AG04450 (cell line): ENCODE measurements at regions of chr6 and their contacts with region 1.

Region 1: DNA sequence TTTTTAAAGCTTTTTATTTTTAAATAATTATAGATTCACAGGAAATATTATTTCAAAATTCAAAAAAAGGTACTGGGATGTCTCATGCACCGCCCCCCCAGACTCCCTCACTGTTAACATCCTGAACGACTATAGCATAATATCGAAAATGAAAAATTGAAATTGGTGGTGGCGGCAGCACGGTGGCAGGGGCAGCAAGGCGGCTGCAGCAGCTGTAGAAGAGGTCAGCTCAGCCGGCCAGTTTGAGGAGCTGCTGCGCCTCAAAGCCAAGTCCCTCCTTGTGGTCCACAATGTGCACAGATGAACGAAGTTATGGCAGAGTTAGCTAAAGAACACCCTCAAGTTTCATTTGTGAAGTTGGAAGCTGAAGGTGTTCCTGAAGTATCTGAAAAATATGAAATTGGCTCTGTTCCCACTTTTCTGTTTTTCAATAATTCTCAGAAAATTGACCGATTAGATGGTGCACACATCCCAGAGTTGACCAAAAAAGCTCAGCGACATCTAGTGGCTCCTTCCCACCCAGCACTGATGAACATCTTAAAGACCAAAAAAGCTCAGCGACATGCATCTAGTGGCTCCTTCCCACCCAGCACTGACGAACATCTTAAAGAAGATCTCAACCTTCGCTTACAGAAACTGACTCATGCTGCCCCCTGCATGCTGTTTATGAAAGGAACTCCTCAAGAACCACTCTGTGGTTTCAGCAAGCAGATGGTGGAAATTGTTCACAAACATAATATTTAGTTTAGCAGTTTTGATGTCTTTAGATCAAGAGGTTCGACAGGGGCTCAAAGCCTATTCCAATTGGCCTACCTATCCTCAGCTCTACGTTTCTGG is 100.8 kb downstream of the FAM217A start:
- DNase-seq: peak; percentile 89
- H3K4me3 ChIP-seq: no peak overlapping the region
- H3K27ac ChIP-seq: no peak overlapping the region
- H3K27me3 ChIP-seq: no peaks in the 10 kb centered on the region
- CTCF ChIP-seq: peak; percentile 76

Region 2: DNA sequence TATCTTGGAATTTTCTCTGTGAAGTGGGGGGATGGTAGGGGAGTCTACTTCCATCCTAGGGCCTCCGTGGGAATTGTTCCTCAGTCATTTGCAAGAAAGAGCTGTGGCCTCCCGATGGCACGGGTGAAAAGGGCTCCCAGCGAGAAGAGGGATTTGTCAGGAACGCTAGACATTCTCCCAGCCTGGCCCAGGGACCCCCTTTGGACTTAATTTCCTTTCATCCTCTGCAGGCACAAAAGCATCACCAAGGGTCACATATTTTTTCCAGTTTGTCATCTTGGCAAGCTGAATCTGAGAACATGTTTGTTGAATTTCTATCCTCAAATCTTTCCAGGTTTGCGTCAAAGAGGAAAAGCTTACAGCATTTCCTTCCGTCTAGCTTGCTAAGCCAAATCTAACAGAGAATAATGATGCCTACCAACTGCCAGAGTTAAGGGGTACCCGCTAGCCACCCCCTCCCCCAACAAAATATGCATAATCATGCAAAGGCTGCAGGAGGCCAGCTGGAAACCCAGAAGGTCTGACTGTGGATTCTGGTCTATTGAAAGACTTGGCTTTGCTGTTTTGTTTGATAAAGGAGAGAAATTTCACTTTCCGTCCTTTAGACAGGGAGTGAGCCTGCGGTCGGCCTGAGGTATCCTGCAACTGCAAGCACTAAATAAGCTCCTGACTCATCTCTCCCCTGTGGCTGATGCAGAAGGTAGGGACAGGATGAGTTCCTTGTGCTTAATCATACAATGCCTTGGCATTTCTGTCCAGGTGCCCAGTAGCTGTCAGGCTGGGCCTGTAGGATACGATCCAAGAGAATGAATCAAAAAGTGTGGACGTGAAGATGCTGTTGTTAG is 696.2 kb before region 1 on chr6:
- CTCF ChIA-PET with region 1: interaction called, 13 read pairs
- POLR2A ChIA-PET with region 1: no interaction called
- DNase-seq: peak; percentile 13
- H3K4me3 ChIP-seq: no peak overlapping the region
- H3K27ac ChIP-seq: peak overlapping the region; percentile 34
- H3K27me3 ChIP-seq: no peaks in the 10 kb centered on the region
- CTCF ChIP-seq: no peak

Region 3: GRCh38 chr6:3748208-3749066 is 229.7 kb before region 1 on chr6:
- CTCF ChIA-PET with region 1: interaction called, 86 read pairs
- POLR2A ChIA-PET with region 1: interaction called, 3 read pairs
- DNase-seq: no peak
- H3K4me3 ChIP-seq: peak overlapping the region; percentile 90
- H3K27ac ChIP-seq: peak overlapping the region; percentile 68
- H3K27me3 ChIP-seq: no peaks in the 10 kb centered on the region
- CTCF ChIP-seq: peak; percentile 76

Region 4: GRCh38 chr6:3887150-3887700 is 90.9 kb before region 1 on chr6:
- CTCF ChIA-PET with region 1: interaction called, 17 read pairs
- POLR2A ChIA-PET with region 1: no interaction called
- DNase-seq: no peak
- H3K4me3 ChIP-seq: no peak overlapping the region
- H3K27ac ChIP-seq: no peak overlapping the region
- H3K27me3 ChIP-seq: no peaks in the 10 kb centered on the region
- CTCF ChIP-seq: peak; percentile 65

Region 5: DNA sequence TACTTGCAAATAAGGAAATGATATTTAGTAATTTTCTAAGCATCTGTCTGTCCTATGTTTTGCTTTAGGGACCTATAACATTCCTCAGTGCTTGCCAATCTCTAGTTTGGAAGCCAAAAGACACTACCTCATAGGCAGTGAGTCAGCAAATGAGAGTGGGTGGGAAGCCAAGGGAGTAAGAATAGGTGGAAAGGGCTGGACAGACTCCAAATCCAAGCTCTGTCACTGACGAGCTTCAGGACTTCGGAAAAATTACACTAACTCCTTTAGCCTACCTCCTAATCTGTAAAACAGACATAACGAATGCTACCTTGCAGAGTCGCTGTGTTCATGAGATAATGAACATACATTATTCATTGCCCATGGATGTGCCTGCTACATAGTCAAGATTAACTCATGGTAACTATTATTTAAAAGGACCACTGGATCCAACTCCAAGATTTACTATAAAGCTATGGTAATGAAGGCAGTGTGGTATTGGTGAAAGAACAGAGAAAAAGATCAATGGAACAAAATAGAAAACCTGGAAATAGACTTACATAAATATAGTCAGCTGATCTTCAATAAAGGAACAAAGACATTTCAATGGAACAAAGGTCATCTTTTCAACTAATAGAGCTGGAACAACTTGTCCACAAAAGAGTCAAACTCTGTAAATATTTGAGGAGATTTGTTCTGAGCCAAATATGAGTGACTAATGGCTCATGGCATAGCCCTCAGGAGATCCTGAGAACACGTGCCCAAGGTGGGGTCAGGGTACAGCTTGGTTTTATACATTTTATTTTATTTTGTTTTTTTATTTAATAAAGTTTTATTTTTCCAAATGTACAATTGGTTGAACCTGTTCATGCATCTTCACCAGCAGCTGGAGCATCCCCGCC is 64.8 kb before region 1 on chr6:
- CTCF ChIA-PET with region 1: interaction called, 18 read pairs
- POLR2A ChIA-PET with region 1: interaction called, 4 read pairs
- DNase-seq: peak; percentile 96
- H3K4me3 ChIP-seq: no peak overlapping the region
- H3K27ac ChIP-seq: no peak overlapping the region
- H3K27me3 ChIP-seq: no peaks in the 10 kb centered on the region
- CTCF ChIP-seq: no peak

Region 6: GRCh38 chr6:3948866-3949265 is 29.2 kb before region 1 on chr6:
- CTCF ChIA-PET with region 1: interaction called, 17 read pairs
- POLR2A ChIA-PET with region 1: interaction called, 3 read pairs
- DNase-seq: no peak
- H3K4me3 ChIP-seq: no peak overlapping the region
- H3K27ac ChIP-seq: no peak overlapping the region
- H3K27me3 ChIP-seq: no peaks in the 10 kb centered on the region
- CTCF ChIP-seq: no peak

Region 7: DNA sequence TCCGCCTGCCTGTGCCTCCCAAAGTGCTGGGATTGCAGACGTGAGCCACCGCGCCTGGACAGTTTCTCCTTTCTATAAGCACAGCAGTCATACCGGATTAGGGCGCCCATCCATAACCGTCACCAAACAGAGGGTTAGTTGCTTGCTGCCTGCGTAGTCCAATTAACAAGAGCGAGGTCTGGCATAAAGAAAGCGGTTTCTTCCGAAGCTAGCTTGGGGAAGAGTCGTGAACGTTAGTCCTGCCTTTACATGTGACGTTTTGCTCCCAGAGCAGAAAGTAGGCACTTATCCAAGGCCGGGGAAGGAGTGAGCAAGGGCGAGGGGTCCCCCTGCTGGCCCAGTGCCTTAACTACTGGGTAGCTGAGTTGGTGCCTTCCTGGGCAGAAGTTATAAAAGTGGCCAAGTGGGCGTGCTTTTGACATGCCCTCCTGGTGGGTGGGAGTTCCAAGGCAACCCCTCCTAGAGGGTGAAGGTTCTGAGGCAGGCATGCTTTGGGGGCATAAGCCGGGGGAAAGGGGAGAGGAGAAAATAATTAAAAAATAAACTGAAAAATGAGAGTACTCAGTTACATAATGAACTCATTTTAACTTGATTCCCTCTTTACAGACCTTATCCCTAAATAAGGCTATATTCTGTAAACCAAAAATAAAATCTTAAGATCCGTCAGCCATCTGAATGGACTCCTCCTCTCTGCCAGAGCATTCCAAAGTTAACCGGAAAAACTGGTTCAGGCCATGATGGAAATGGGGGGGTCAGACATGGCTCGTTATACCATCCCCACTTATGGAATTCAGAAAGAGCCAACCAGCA is 12.8 kb after region 1 on chr6:
- CTCF ChIA-PET with region 1: interaction called, 35 read pairs
- POLR2A ChIA-PET with region 1: interaction called, 3 read pairs
- DNase-seq: peak; percentile 76
- H3K4me3 ChIP-seq: no peak overlapping the region
- H3K27ac ChIP-seq: no peak overlapping the region
- H3K27me3 ChIP-seq: no peaks in the 10 kb centered on the region
- CTCF ChIP-seq: peak; percentile 97

Region 8: DNA sequence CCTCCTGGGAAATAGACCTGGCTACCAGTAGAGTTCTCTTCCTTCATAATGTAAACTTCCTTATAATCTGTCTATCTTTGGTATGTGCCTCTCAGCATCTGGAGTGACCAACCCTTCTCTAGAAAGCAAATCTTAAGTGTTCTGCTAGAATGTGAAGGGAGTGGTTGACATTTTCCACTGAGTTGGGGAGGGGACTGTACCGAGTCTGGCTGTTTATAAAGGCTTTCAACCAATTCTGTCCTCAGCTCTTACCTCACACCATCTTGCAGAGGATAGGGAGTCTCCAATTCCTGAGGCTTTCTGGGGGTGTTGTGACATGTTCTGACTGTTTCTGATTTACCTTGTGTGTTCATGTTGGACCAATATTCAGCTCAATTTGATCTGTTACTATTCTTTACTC is 61.3 kb after region 1 on chr6:
- CTCF ChIA-PET with region 1: no interaction called
- POLR2A ChIA-PET with region 1: no interaction called
- DNase-seq: no peak
- H3K4me3 ChIP-seq: no peak overlapping the region
- H3K27ac ChIP-seq: no peak overlapping the region
- H3K27me3 ChIP-seq: no peaks in the 10 kb centered on the region
- CTCF ChIP-seq: no peak

Region 9: GRCh38 chr6:4870821-4871494 is 892.9 kb after region 1 on chr6:
- CTCF ChIA-PET with region 1: no interaction called
- POLR2A ChIA-PET with region 1: no interaction called
- DNase-seq: no peak
- H3K4me3 ChIP-seq: no peak overlapping the region
- H3K27ac ChIP-seq: no peak overlapping the region
- H3K27me3 ChIP-seq: no peaks in the 10 kb centered on the region
- CTCF ChIP-seq: no peak